Activated T-helper 2 cell treated with anti-CD3 and anti-CD28 coated beads, Interferon-gamma antibody, Interleukin-2, Interleukin-4, amounts not matched to agents 10 μg/mL and 5 μg/mL and 100 μg/mL, durations not matched to agents 14 hours and 24 hours and 36 hours (primary cell): ENCODE measurements at regions of chr1 and their contacts with region 1.

Region 1: GRCh38 chr1:33127001-33127791 is 46.2 kb downstream of the AZIN2 start:
- DNase-seq: peak; percentile 99
- H3K4me3 Mint-ChIP-seq: peak overlapping the region; percentile 96
- H3K27ac Mint-ChIP-seq: peak overlapping the region; percentile 96
- H3K4me1 Mint-ChIP-seq: peaks cover 46% of the 10 kb centered on the region
- H3K27me3 Mint-ChIP-seq: no peaks in the 10 kb centered on the region

Region 2: DNA sequence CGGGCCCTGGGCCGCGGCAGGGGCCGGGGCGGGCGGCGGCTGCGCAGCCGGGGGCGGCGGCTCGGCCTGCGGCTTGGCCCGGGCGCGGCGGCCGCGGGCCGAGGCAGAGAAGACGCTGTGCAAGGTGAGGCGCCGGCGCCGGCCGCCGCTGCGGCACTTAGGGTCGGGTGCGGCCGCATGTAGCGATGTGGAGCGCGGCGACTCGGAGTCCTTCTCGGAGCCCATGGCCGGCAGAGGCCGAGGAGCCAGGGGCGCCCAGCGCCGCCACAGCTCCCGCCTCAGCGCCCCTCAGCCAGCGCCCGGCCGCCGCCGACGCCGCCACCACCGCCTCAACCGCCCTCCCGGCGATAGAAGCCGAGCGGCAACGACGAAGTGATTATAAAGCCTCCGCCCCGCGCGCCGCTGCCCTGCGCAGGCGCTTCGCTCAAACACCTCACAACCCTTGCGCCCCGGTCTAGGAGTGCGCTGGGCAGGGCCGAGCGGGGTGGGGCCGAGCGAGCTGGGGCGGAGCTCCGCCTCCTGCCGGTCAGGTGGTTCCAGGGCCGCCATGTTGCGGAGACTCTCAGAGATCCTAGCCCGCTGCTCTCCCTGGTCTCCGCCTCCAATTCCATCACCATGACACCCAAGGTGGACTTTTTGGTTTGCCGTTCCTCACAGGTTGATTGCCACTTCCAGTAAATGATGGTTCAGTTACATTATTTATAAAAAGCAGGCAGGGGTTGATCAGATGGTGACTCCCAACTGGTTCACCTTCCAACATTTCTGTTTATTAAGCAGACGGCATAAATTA is 162.5 kb before region 1 on chr1 and contains the start of gene RNF19B:
- intact Hi-C with region 1: loop called (anchors 5 kb)
- DNase-seq: peak; percentile 94
- H3K4me3 Mint-ChIP-seq: peak within 1 kb of the TSS; percentile 91
- H3K27ac Mint-ChIP-seq: peak within 1 kb of the TSS; percentile 74
- H3K4me1 Mint-ChIP-seq: peaks cover 49% of the 10 kb centered on the region
- H3K27me3 Mint-ChIP-seq: no peaks in the 10 kb centered on the region
- total RNA-seq, gene RNF19B: 50.4 and 52.5 TPM in 2 replicates

Region 3: GRCh38 chr1:33080885-33081553 is 46.2 kb before region 1 on chr1 and contains the start of gene AZIN2:
- intact Hi-C with region 1: loop called (anchors 5 kb)
- DNase-seq: peak; percentile 91
- H3K4me3 Mint-ChIP-seq: peak within 1 kb of the TSS; percentile 70
- H3K27ac Mint-ChIP-seq: no peak within 1 kb of the TSS
- H3K4me1 Mint-ChIP-seq: peaks cover 20% of the 10 kb centered on the region
- H3K27me3 Mint-ChIP-seq: peaks cover 25% of the 10 kb centered on the region
- total RNA-seq, gene AZIN2: 2.4 and 2.9 TPM in 2 replicates

Region 4: DNA sequence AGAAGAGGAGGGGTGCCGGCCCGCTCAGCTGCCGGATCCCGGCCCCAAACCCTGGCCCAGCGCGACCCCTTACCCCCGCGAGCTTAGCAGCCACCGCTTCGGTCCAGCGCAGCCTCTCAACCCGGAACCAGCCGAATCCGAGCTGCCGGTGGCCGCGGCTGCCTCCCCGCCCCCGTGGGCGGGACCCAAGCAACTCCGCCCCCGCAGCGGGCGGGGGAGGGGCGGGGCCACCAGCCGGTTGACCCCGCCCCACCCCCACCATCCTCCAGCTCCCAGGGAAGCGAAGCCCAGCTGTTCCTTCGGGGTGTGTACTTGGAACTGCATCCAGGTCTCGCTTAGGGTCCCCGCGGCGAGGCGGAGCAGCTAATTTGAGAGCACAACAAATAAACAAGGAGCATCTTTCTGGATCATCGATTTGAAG is 54.7 kb after region 1 on chr1 and contains the start of gene TRIM62:
- intact Hi-C with region 1: loop called (anchors 2 kb)
- DNase-seq: peak; percentile 70
- H3K4me3 Mint-ChIP-seq: peak within 1 kb of the TSS; percentile 80
- H3K27ac Mint-ChIP-seq: peak within 1 kb of the TSS; percentile 55
- H3K4me1 Mint-ChIP-seq: peaks cover 23% of the 10 kb centered on the region
- H3K27me3 Mint-ChIP-seq: peaks cover 27% of the 10 kb centered on the region
- total RNA-seq, gene TRIM62: 5.0 and 5.6 TPM in 2 replicates

Region 5: GRCh38 chr1:33349778-33350610 is 222.8 kb after region 1 on chr1:
- intact Hi-C with region 1: loop called (anchors 2 kb)
- DNase-seq: peak; percentile 79
- H3K4me3 Mint-ChIP-seq: peak overlapping the region; percentile 82
- H3K27ac Mint-ChIP-seq: peak overlapping the region; percentile 89
- H3K4me1 Mint-ChIP-seq: peaks cover 42% of the 10 kb centered on the region
- H3K27me3 Mint-ChIP-seq: peaks cover 3% of the 10 kb centered on the region